Activated CD4-positive, alpha-beta memory T cell treated with anti-CD3 and anti-CD28 coated beads for 36 hours (primary cell): ENCODE measurements at regions of chr13 and their contacts with region 1.

Region 1: GRCh38 chr13:30465585-30466357 is at the start of gene HMGB1:
- DNase-seq: peak; percentile 99
- H3K4me3 Mint-ChIP-seq: peak within 1 kb of the TSS; percentile 89
- H3K27ac Mint-ChIP-seq: peak within 1 kb of the TSS; percentile 99
- H3K4me1 Mint-ChIP-seq: peaks cover 31% of the 10 kb centered on the region
- H3K27me3 Mint-ChIP-seq: peaks cover 3% of the 10 kb centered on the region
- total RNA-seq, gene HMGB1: 689 to 693 TPM

Region 2: GRCh38 chr13:29850224-29850898 is 615.4 kb before region 1 on chr13 and contains the start of gene UBL3:
- CTCF ChIA-PET with region 1: no interaction called
- POLR2A ChIA-PET with region 1: interaction called, 3 read pairs
- intact Hi-C with region 1: loop called (anchors 2 kb)
- DNase-seq: peak; percentile 97
- H3K4me3 Mint-ChIP-seq: peak within 1 kb of the TSS; percentile 90
- H3K27ac Mint-ChIP-seq: peak within 1 kb of the TSS; percentile 98
- H3K4me1 Mint-ChIP-seq: peaks cover 46% of the 10 kb centered on the region
- H3K27me3 Mint-ChIP-seq: no peaks in the 10 kb centered on the region
- total RNA-seq, gene UBL3: 15.3 to 15.5 TPM

Region 3: GRCh38 chr13:30142486-30143211 is 323.1 kb before region 1 on chr13:
- CTCF ChIA-PET with region 1: interaction called, 3 read pairs
- POLR2A ChIA-PET with region 1: interaction called, 3 read pairs
- intact Hi-C with region 1: loop called (anchors 1 kb)
- DNase-seq: peak; percentile 68
- H3K4me3 Mint-ChIP-seq: no peak overlapping the region
- H3K27ac Mint-ChIP-seq: peak overlapping the region; percentile 92
- H3K4me1 Mint-ChIP-seq: peaks cover 70% of the 10 kb centered on the region
- H3K27me3 Mint-ChIP-seq: no peaks in the 10 kb centered on the region

Region 4: DNA sequence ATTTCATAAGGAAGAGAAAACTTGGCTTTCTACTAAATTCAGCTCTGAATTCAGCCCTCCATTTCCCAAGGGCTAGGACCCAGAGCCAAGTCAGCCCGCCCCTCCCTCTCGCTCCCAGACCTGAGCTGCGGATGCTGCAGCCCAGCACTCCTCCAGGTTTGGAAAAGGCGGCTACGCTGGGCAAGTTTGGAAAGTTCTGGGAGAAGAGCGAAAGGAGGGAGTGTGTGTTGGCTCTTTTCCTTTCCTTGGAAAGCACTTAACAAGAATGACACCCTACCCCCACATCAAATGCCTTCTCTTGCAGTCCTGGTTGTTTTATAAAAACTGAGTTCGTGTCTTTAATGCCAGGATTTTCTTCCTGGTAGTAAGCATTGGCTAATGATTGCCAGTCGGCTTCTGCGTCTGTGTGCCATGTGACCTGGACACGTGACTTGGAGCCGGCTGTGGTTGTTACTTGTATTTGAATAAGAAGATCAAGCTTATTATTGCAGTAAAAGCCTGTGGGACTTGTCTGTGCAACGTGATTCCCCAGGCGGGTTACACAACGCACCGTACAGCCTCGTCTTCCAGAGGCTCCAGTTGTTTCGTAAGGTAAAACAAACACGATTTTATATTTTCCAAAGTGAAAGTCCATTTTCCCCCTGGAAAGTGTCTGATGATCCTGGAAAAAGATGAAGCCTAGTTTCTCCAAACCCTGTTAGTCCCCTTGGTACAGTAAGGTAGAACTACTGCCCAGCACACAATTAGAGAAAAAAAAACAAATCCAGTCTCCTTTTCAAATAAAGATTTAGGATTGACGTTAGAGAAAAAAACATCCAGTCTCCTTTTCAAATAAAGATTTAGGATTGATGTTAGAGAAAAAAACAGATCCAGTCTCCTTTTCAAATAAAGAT is 70.3 kb before region 1 on chr13:
- CTCF ChIA-PET with region 1: interaction called, 4 read pairs
- POLR2A ChIA-PET with region 1: no interaction called
- intact Hi-C with region 1: loop called (anchors 1 kb)
- DNase-seq: peak; percentile 85
- H3K4me3 Mint-ChIP-seq: peak overlapping the region; percentile 81
- H3K27ac Mint-ChIP-seq: peak overlapping the region; percentile 83
- H3K4me1 Mint-ChIP-seq: peaks cover 23% of the 10 kb centered on the region
- H3K27me3 Mint-ChIP-seq: no peaks in the 10 kb centered on the region

Region 5: GRCh38 chr13:30429721-30430694 is 35.8 kb before region 1 on chr13:
- CTCF ChIA-PET with region 1: no interaction called
- POLR2A ChIA-PET with region 1: interaction called, 9 read pairs
- intact Hi-C with region 1: loop called (anchors 2 kb)
- DNase-seq: peak; percentile 47
- H3K4me3 Mint-ChIP-seq: peak overlapping the region; percentile 61
- H3K27ac Mint-ChIP-seq: peak overlapping the region; percentile 86
- H3K4me1 Mint-ChIP-seq: peaks cover 26% of the 10 kb centered on the region
- H3K27me3 Mint-ChIP-seq: no peaks in the 10 kb centered on the region

Region 6: DNA sequence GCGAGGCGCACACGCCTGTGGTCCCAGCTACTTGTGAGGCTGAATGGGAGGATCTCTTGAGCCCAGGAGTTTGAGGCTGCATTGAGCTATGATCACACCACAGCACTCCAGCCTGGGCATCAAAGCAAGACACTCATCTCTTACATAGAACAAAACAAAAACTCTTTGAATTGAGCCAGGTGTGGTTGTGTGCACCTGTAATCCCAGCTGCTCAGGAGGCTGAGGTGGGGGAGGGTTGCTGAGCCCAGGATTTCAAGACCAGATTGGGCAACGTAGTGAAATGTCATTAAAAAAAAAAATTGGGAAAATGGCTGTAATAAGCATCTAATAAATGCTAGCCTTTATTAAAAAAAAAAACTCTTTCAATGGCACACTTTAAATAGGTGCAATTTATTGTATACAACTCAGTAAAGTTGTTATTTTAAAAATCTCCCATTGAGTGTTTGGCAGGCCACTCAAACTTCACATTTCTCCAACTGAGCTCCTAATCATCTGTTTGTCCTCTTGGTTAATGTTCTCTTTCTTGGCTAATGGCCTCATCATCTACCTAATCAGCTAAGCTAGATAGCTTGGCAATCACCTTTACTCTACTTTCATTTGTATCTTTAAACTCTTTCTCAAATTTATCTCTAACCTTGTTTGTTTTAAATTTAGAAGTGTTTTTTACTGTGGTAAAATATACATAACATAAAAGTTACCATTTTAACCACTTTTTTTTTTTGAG is 28.0 kb after region 1 on chr13:
- CTCF ChIA-PET with region 1: no interaction called
- POLR2A ChIA-PET with region 1: no interaction called
- intact Hi-C with region 1: no loop called
- DNase-seq: no peak
- H3K4me3 Mint-ChIP-seq: no peak overlapping the region
- H3K27ac Mint-ChIP-seq: no peak overlapping the region
- H3K4me1 Mint-ChIP-seq: no peaks in the 10 kb centered on the region
- H3K27me3 Mint-ChIP-seq: no peaks in the 10 kb centered on the region

Region 7: GRCh38 chr13:30617315-30618185 is 151.8 kb after region 1 on chr13 and contains the start of gene USPL1:
- CTCF ChIA-PET with region 1: interaction called, 3 read pairs
- POLR2A ChIA-PET with region 1: interaction called, 46 read pairs
- intact Hi-C with region 1: loop called (anchors 1 kb)
- DNase-seq: peak; percentile 99
- H3K4me3 Mint-ChIP-seq: no peak within 1 kb of the TSS
- H3K27ac Mint-ChIP-seq: no peak within 1 kb of the TSS
- H3K4me1 Mint-ChIP-seq: peaks cover 26% of the 10 kb centered on the region
- H3K27me3 Mint-ChIP-seq: no peaks in the 10 kb centered on the region
- total RNA-seq, gene USPL1: 13.3 to 13.8 TPM

Region 8: GRCh38 chr13:30659980-30660379 is 194.2 kb after region 1 on chr13:
- CTCF ChIA-PET with region 1: no interaction called
- POLR2A ChIA-PET with region 1: no interaction called
- intact Hi-C with region 1: no loop called
- DNase-seq: no peak
- H3K4me3 Mint-ChIP-seq: no peak overlapping the region
- H3K27ac Mint-ChIP-seq: no peak overlapping the region
- H3K4me1 Mint-ChIP-seq: peaks cover 4% of the 10 kb centered on the region
- H3K27me3 Mint-ChIP-seq: no peaks in the 10 kb centered on the region

Region 9: DNA sequence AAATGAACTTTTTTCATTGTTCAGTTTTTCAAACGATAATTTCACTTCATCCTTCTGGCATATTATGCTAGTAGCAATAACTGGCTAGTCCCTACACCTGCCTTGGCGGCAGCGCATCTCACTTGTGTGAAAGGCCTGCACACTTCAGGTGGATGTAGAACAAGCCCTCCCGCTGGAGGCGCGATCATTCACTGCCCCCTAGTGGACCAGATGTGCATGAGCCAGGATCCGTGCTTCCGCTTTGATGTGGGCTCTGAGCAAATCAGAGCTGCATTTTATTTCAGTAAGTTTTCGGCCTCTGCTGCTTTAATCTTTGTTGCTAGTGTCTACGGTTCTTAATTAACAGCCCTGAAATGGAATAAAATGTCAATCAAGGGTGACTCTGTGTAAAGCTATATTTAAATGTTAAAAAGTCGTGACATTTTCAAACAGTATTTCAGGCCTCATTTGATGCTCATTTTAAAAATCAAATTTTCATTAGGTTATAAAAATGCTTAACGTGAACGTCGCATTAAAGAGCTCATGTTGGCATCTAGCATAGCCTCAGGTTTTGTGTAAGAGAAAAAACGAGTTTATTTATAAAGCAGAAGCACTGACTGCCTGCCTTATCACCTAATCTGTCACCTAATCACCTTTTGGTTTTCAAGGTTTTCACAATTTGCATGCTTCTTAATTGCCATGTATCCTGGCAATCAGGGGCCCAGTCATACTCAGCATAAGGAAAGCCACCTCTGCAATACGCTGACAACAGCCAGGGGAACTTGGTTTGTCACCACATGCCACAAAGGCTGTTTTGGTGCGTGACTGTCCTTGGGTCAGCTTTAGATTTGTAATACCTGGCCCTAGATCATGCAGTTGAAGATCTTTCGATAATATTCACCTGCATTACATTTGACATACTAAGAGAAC is 578.9 kb after region 1 on chr13:
- CTCF ChIA-PET with region 1: interaction called, 3 read pairs
- POLR2A ChIA-PET with region 1: no interaction called
- intact Hi-C with region 1: loop called (anchors 10 kb)
- DNase-seq: peak; percentile 91
- H3K4me3 Mint-ChIP-seq: no peak overlapping the region
- H3K27ac Mint-ChIP-seq: peak overlapping the region; percentile 93
- H3K4me1 Mint-ChIP-seq: peaks cover 48% of the 10 kb centered on the region
- H3K27me3 Mint-ChIP-seq: peaks cover 3% of the 10 kb centered on the region